Dorsolateral prefrontal cortex (tissue), 120 donors: ENCODE measurements at regions of chr1 and their contacts with region 1.

Region 1: GRCh38 chr1:181485287-181486097 is 2.2 kb downstream of the CACNA1E start:
- DNase-seq: peak in 8 of 10 donors; percentile 58 to 88 (median 76)
- H3K4me3 ChIP-seq: peak overlapping the region; percentile 10 to 73 (median 61)
- H3K27ac ChIP-seq: peak overlapping the region in 51 of 59 donors; percentile 7 to 91 (median 67)
- H3K27me3 ChIP-seq: peaks cover 0 to 48% (median 3%) of the 10 kb centered on the region in 45 donors
- CTCF ChIP-seq: peak in 8 of 56 donors; percentile 5 to 23 (median 16)

Region 2: DNA sequence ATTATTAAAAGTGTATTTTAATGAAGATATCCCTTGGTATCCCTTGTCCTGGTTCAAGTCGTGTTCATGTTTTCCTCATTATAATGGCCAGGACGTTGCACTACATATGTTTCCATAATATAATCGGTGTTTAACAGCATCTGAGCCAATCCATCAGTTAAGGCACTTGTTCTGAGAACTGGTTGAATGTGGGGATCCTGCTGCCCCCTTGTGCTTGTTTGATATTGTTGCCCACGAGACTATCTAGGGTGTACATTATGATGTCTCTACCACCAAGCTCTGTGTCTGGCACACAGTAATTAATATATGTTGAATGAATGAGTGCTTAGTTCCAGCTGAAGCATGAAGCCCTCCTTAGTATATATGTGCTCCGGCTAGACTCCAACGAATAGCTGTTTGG is 190.8 kb after region 1 on chr1:
- intact Hi-C with region 1: loop called in 1 of 2 experiments (anchors 5 kb)
- DNase-seq: peak in 7 of 10 donors; percentile 30 to 81 (median 63)
- H3K4me3 ChIP-seq: peak overlapping the region in 20 of 59 donors; percentile 0 to 41 (median 18)
- H3K27ac ChIP-seq: peak overlapping the region in 15 of 59 donors; percentile 21 to 90 (median 73)
- H3K27me3 ChIP-seq: no peaks in the 10 kb centered on the region
- CTCF ChIP-seq: peak; percentile 31 to 76 (median 59)